ENCODE measurements at regions of chr1 and their contacts with region 1.

Region 1: GRCh38 chr1:192477630-192478029 is 97.9 kb upstream of the RGS1 start:
- DNase-seq: no peak
- H3K4me3 Mint-ChIP-seq: no peak overlapping the region
- H3K27ac Mint-ChIP-seq: no peak overlapping the region
- H3K4me1 Mint-ChIP-seq: no peaks in the 10 kb centered on the region
- H3K27me3 Mint-ChIP-seq: peaks cover 3% of the 10 kb centered on the region

Region 2: DNA sequence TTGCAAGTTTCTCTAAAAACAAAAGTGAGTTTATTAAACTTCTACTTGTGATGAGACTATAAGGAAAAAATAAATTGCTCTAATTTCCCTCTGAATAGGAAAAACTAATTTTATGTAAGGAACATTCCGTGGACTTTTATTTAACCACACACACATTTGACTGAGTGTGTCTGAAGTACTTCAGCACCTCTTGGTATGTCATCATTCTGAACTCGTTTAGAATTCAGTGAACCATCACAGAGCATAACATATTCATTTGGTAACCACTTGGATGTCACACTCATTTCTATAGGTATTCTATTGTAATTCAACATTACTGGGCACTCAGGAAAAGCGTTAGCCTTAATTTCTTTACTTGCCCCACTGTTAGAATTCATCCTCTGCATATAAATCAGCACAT is 81.7 kb before region 1 on chr1:
- CTCF ChIA-PET with region 1: no interaction called
- POLR2A ChIA-PET with region 1: no interaction called
- DNase-seq: no peak
- H3K4me3 Mint-ChIP-seq: no peak overlapping the region
- H3K27ac Mint-ChIP-seq: no peak overlapping the region
- H3K4me1 Mint-ChIP-seq: no peaks in the 10 kb centered on the region
- H3K27me3 Mint-ChIP-seq: no peaks in the 10 kb centered on the region

Region 3: DNA sequence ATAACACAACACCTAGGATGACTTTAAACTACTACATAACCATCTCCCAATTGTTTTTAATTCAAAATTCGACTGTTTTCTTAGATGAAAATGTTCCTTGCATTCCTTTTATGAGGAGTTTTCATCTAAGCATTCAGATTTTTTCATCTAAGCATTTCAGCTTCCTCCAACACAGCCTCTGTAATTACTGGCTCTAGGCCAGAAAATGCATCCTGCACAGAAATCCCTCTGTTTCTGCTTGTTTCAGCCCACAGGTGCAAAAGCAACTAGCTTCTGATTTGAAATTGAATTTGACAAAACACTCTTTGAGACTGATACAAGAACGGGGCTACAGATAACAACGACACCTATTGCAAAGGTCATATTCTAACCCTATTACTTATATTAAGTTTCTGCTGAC is 70.4 kb before region 1 on chr1:
- CTCF ChIA-PET with region 1: no interaction called
- POLR2A ChIA-PET with region 1: no interaction called
- DNase-seq: no peak
- H3K4me3 Mint-ChIP-seq: no peak overlapping the region
- H3K27ac Mint-ChIP-seq: no peak overlapping the region
- H3K4me1 Mint-ChIP-seq: no peaks in the 10 kb centered on the region
- H3K27me3 Mint-ChIP-seq: no peaks in the 10 kb centered on the region

Region 4: DNA sequence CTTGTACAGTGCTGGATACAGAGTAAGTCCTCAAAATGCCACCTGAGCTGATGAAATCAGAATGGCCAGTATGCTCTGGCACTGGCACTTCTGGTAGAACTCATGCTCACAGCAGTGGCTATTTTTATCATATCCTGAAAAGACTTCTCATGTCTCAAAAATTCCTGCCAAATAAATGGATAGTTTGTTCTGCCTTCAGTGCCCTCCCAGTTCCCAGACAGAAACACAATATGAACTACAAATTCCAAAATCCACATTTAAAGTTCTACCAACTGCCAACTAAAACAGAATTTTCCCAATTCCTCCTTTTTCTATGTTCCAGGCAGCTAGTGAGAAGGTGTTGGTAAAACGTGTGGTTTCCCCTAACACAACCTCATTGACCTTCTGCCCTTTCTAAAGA is 46.6 kb after region 1 on chr1:
- CTCF ChIA-PET with region 1: no interaction called
- POLR2A ChIA-PET with region 1: no interaction called
- DNase-seq: no peak
- H3K4me3 Mint-ChIP-seq: no peak overlapping the region
- H3K27ac Mint-ChIP-seq: no peak overlapping the region
- H3K4me1 Mint-ChIP-seq: peaks cover 25% of the 10 kb centered on the region
- H3K27me3 Mint-ChIP-seq: no peaks in the 10 kb centered on the region

Region 5: DNA sequence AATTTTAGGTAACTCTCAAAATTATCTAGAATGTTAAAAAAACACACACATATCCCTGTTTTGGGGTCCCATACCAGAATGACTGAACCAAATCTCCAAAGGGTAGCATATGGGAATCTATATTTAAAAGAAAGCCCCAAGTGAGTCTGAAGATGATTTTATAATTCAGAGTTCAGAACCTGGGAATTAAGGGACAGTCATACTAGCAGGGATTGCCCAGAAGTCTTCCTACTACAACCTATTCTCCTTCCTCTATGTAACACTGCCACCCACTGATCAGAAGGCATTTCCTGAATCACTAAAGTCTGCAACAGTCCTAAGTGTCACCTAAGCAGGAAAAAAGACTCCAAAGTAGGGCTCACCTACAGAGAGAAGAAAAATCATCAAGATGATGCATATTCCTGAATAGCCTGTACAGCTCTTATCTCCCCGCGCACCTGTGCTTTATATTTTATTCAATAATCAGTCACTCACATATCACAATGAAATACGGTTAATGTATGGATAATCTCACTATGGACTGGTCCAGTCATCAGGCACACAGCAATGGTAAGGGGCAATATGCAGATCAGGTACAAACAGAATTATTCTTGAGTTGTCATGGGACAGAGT is 102.8 kb after region 1 on chr1:
- CTCF ChIA-PET with region 1: interaction called, 94 read pairs
- POLR2A ChIA-PET with region 1: no interaction called
- DNase-seq: no peak
- H3K4me3 Mint-ChIP-seq: peak overlapping the region; percentile 15
- H3K27ac Mint-ChIP-seq: no peak overlapping the region
- H3K4me1 Mint-ChIP-seq: peaks cover 39% of the 10 kb centered on the region
- H3K27me3 Mint-ChIP-seq: no peaks in the 10 kb centered on the region

Region 6: GRCh38 chr1:192598589-192598988 is 121.0 kb after region 1 on chr1:
- CTCF ChIA-PET with region 1: interaction called, 10 read pairs
- POLR2A ChIA-PET with region 1: interaction called, 3 read pairs
- DNase-seq: no peak
- H3K4me3 Mint-ChIP-seq: no peak overlapping the region
- H3K27ac Mint-ChIP-seq: no peak overlapping the region
- H3K4me1 Mint-ChIP-seq: peaks cover 28% of the 10 kb centered on the region
- H3K27me3 Mint-ChIP-seq: peaks cover 5% of the 10 kb centered on the region

Region 7: GRCh38 chr1:192609110-192610079 is 131.8 kb after region 1 on chr1:
- CTCF ChIA-PET with region 1: interaction called, 48 read pairs
- POLR2A ChIA-PET with region 1: no interaction called
- DNase-seq: peak; percentile 76
- H3K4me3 Mint-ChIP-seq: peak overlapping the region; percentile 40
- H3K27ac Mint-ChIP-seq: peak overlapping the region; percentile 61
- H3K4me1 Mint-ChIP-seq: peaks cover 15% of the 10 kb centered on the region
- H3K27me3 Mint-ChIP-seq: peaks cover 1% of the 10 kb centered on the region

Region 8: DNA sequence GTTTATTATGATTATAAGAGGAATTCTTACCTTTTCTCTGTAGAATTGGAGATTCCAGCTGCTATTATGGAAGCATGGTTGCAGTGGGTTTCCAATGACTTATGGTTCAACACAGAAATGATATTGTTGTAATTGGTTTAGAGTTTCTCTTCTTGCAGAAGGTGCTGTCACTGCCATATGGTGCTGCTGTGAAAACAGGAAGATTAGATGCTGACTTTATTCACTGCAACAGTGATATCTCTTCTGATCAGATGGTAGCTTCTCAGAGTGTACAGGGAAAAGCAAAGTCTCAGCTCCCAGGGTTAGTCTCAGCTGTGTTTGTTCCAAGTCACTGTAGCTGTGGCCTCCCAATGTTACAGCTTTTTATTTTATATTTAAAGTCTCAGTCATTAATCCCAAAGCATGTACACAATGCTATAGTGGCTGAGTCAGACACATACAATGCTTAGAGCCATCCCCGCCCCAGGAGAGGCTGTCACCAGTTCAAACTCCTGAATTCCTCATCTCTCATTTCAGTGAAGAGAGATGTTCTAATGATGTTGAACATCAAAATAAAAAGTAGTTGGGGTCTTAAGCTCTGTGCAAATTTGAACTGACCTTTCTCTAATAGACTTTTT is 288.5 kb after region 1 on chr1:
- CTCF ChIA-PET with region 1: no interaction called
- POLR2A ChIA-PET with region 1: no interaction called
- DNase-seq: no peak
- H3K4me3 Mint-ChIP-seq: no peak overlapping the region
- H3K27ac Mint-ChIP-seq: no peak overlapping the region
- H3K4me1 Mint-ChIP-seq: peaks cover 12% of the 10 kb centered on the region
- H3K27me3 Mint-ChIP-seq: peaks cover 5% of the 10 kb centered on the region

Region 9: GRCh38 chr1:193019442-193020026 is 541.9 kb after region 1 on chr1:
- CTCF ChIA-PET with region 1: interaction called, 17 read pairs
- POLR2A ChIA-PET with region 1: no interaction called
- DNase-seq: no peak
- H3K4me3 Mint-ChIP-seq: no peak overlapping the region
- H3K27ac Mint-ChIP-seq: no peak overlapping the region
- H3K4me1 Mint-ChIP-seq: no peaks in the 10 kb centered on the region
- H3K27me3 Mint-ChIP-seq: no peaks in the 10 kb centered on the region

Measured in activated CD4-positive, alpha-beta memory T cell treated with anti-CD3 and anti-CD28 coated beads, Interleukin-2, amount 10 ng/mL, durations not matched to agents 7 days and 5 days (primary cell).